ENCODE measurements at regions of chr5 and their contacts with region 1.

Region 1: GRCh38 chr5:87400305-87400899 is 12.3 kb downstream of the CCNH start:
- DNase-seq: no peak
- H3K4me3 ChIP-seq: no peak overlapping the region
- H3K27ac ChIP-seq: peak overlapping the region in 2 of 5 donors; percentile 7 to 54
- H3K4me1 ChIP-seq: peaks cover 0 to 18% of the 10 kb centered on the region in 2 donors
- H3K27me3 ChIP-seq: no peaks in the 10 kb centered on the region
- CTCF ChIP-seq: peak; percentile 58 to 84 (median 70)
- POLR2A ChIP-seq: no peak

Region 2: GRCh38 chr5:87267574-87268125 is 132.8 kb before region 1 on chr5 and contains the start of gene RASA1:
- intact Hi-C with region 1: loop called (anchors 10 kb)
- DNase-seq: peak; percentile 94 to 98 (median 97)
- H3K4me3 ChIP-seq: peak within 1 kb of the TSS; percentile 58 to 94 (median 84)
- H3K27ac ChIP-seq: peak within 1 kb of the TSS; percentile 69 to 89 (median 86)
- H3K4me1 ChIP-seq: peaks cover 6 to 15% of the 10 kb centered on the region in 2 donors
- H3K27me3 ChIP-seq: no peaks in the 10 kb centered on the region
- CTCF ChIP-seq: peak in 1 of 6 experiments; percentile 6
- POLR2A ChIP-seq: peak; percentile 63 to 82
- total RNA-seq, gene RASA1: 18.8 to 32.7 (median 25.7) TPM

Measured in adrenal gland (tissue), 19 donors.